ENCODE measurements at regions of chr7 and their contacts with region 1.

Region 1: GRCh38 chr7:23531794-23532489 is at the start of gene TRA2A:
- DNase-seq: peak; percentile 94
- H3K4me3 Mint-ChIP-seq: peak within 1 kb of the TSS; percentile 97
- H3K27ac Mint-ChIP-seq: peak within 1 kb of the TSS; percentile 99
- H3K4me1 Mint-ChIP-seq: peaks cover 39% of the 10 kb centered on the region
- H3K27me3 Mint-ChIP-seq: no peaks in the 10 kb centered on the region
- total RNA-seq, gene TRA2A: 105 and 115 TPM in 2 replicates

Region 2: DNA sequence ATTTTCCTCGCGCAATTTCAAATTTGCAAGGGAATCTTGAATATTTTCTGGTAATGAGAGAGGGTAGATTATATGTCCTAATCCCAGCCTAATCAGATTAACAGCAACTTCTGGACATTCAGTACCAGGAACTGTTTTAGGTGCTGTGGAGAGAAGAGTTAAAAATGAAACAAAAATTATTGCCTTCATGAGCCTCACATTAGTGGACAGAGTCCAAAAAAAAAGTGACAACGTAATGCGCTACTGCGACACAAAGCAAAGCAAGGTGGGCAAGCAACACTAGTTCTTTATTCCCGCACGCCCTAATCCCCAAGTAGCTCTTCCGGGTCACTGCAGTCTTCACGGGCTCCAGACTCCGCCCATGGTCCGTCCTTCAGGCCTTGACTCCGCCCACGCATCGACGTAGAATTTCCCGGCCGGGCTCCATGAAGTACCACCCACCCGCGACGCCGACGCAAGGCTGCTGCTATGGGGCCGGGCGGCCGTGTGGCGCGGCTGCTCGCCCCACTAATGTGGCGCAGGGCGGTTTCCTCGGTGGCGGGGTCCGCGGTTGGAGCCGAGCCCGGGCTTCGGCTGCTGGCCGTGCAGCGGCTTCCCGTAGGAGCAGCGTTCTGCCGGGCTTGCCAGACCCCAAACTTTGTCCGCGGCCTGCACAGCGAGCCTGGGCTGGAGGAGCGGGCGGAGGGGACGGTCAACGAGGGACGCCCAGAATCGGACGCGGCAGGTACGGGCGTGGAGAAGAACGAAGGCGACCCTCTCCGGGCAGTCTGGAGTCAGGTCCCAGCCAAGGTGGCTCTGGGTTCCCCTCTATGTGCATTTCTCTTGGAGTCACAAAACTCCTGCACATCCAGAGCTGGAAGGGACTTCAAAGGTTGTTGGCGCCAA is 232.8 kb before region 1 on chr7 and contains the start of gene MALSU1:
- intact Hi-C with region 1: loop called (anchors 1 kb)
- DNase-seq: peak; percentile 93
- H3K4me3 Mint-ChIP-seq: peak within 1 kb of the TSS; percentile 86
- H3K27ac Mint-ChIP-seq: peak within 1 kb of the TSS; percentile 92
- H3K4me1 Mint-ChIP-seq: peaks cover 32% of the 10 kb centered on the region
- H3K27me3 Mint-ChIP-seq: no peaks in the 10 kb centered on the region
- total RNA-seq, gene MALSU1: 83.6 and 89.0 TPM in 2 replicates

Region 3: DNA sequence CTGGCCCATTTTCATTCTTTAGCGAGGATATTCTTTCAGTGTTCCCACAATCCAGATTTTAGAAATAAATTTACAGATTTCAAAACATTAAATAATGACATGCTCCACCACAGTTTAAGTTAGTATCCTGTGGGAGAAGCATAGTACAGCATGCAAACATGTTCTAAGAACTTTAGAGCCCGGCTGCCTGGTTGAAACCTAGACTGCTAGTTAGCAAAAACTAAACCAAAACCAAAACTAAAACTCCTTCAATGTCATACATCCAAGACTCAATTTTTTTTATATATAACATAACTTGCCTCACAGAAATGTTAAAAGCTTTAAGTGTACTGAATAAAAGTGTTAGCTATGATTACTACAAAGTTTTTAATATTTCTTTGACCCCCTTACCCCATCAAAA is 17.2 kb before region 1 on chr7:
- intact Hi-C with region 1: loop called (anchors 2 kb)
- DNase-seq: no peak
- H3K4me3 Mint-ChIP-seq: no peak overlapping the region
- H3K27ac Mint-ChIP-seq: peak overlapping the region; percentile 7
- H3K4me1 Mint-ChIP-seq: peaks cover 17% of the 10 kb centered on the region
- H3K27me3 Mint-ChIP-seq: no peaks in the 10 kb centered on the region

Region 4: GRCh38 chr7:24216576-24217125 is 684.7 kb after region 1 on chr7:
- intact Hi-C with region 1: no loop called
- DNase-seq: no peak
- H3K4me3 Mint-ChIP-seq: no peak overlapping the region
- H3K27ac Mint-ChIP-seq: no peak overlapping the region
- H3K4me1 Mint-ChIP-seq: no peaks in the 10 kb centered on the region
- H3K27me3 Mint-ChIP-seq: peaks cover 20% of the 10 kb centered on the region

Measured in activated T-helper 2 cell treated with anti-CD3 and anti-CD28 coated beads, Interferon-gamma antibody, Interleukin-2, Interleukin-4, amounts not matched to agents 10 μg/mL and 5 μg/mL and 100 μg/mL, durations not matched to agents 14 hours and 24 hours and 36 hours (primary cell).